Activated CD4-positive, alpha-beta T cell treated with anti-CD3 and anti-CD28 coated beads for 36 hours (primary cell): ENCODE measurements at regions of chr9 and their contacts with region 1.

Region 1: GRCh38 chr9:4750023-4750673 is 9.1 kb upstream of the AK3 start:
- DNase-seq: no peak
- ATAC-seq: peak; percentile 39
- H3K4me3 Mint-ChIP-seq: no peak overlapping the region
- H3K27ac Mint-ChIP-seq: no peak overlapping the region
- H3K4me1 Mint-ChIP-seq: peaks cover 18% of the 10 kb centered on the region
- H3K27me3 Mint-ChIP-seq: no peaks in the 10 kb centered on the region

Region 2: DNA sequence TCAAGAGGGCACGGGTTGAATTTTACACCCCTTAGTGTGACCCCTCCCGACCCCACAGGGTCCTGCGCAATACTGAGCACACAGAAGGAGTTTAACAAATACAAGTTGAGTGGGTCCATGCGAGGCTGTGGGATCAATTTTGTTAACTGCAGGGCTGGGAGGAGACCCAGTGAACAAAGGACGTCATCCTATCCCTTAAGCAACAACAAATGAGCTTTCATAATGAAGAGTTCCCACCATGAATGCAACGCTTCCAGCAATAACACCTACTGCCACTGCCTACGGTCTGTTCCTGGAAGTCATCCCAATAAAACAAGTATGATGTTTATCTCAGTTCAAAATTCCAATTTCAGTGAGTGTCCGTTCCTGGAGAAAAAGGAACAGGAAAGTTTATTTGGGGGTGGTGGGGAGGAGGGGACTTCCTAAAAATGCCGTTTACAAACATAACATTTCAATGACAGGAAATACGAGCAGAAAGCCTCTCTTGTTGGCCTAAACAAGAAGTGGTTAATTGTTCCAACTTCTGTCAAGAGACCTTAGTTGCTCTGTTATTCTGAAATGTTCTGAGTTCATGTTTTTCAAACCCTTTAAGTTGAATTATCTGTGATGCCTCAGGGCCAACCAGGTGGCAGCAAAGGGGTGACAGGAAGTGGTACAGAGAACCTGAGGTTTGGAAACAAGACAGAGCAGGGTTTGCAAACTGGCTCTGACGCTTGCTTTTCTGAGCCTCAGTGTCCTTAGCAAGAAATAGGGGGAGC is 153.8 kb before region 1 on chr9:
- CTCF ChIA-PET with region 1: interaction called, 3 read pairs
- POLR2A ChIA-PET with region 1: no interaction called
- intact Hi-C with region 1: loop called in 1 of 2 experiments (anchors 10 kb)
- DNase-seq: peak; percentile 64
- ATAC-seq: peak; percentile 87
- H3K4me3 Mint-ChIP-seq: no peak overlapping the region
- H3K27ac Mint-ChIP-seq: peak overlapping the region; percentile 82
- H3K4me1 Mint-ChIP-seq: peaks cover 49% of the 10 kb centered on the region
- H3K27me3 Mint-ChIP-seq: no peaks in the 10 kb centered on the region

Region 3: DNA sequence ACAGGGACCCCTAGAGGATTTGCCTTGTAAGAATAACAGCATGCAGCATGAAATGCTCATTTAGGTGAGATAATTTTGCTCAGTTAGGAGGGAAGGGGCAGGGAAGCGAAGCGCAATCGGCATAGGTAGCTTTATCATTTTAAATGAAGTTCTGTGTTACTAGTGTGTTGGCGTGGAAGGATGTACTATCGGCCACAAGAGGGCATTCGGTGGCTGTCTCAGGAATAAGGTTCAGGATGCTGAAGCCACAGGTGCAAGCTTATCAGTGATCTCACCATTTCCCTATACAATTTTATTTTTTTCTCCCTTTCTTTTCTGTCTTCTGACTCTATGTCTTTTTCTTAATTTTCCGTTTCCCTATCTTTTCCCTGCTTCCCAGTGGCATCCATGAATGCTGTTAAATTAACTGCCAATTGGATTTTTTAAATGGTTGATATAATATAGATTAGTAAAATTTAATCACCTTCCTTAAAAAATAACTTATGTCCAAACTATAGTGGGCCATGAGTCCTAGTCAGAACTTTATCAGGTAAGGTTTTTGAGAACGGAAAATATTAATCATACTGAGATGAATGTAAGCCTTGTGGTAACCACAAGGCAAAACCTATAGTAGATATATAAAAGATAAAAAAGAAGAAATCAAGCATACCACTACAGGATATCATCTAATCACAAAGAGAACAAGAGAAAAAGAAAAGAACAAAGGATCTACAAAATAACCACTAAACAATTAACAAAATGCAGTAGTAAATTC is 436.4 kb after region 1 on chr9:
- CTCF ChIA-PET with region 1: interaction called, 3 read pairs
- POLR2A ChIA-PET with region 1: no interaction called
- intact Hi-C with region 1: loop called in 1 of 2 experiments (anchors 10 kb)
- DNase-seq: peak; percentile 75
- ATAC-seq: peak; percentile 84
- H3K4me3 Mint-ChIP-seq: no peak overlapping the region
- H3K27ac Mint-ChIP-seq: no peak overlapping the region
- H3K4me1 Mint-ChIP-seq: peaks cover 17% of the 10 kb centered on the region
- H3K27me3 Mint-ChIP-seq: no peaks in the 10 kb centered on the region